ENCODE measurements at regions of chr1 and their contacts with region 1.

Region 1: GRCh38 chr1:225777583-225778336 is at the start of gene SRP9:
- DNase-seq: peak; percentile 100
- H3K4me3 Mint-ChIP-seq: no peak within 1 kb of the TSS
- H3K27ac Mint-ChIP-seq: no peak within 1 kb of the TSS
- H3K4me1 Mint-ChIP-seq: peaks cover 22% of the 10 kb centered on the region
- H3K27me3 Mint-ChIP-seq: no peaks in the 10 kb centered on the region
- total RNA-seq, gene SRP9: 232 and 244 TPM in 2 replicates

Region 2: DNA sequence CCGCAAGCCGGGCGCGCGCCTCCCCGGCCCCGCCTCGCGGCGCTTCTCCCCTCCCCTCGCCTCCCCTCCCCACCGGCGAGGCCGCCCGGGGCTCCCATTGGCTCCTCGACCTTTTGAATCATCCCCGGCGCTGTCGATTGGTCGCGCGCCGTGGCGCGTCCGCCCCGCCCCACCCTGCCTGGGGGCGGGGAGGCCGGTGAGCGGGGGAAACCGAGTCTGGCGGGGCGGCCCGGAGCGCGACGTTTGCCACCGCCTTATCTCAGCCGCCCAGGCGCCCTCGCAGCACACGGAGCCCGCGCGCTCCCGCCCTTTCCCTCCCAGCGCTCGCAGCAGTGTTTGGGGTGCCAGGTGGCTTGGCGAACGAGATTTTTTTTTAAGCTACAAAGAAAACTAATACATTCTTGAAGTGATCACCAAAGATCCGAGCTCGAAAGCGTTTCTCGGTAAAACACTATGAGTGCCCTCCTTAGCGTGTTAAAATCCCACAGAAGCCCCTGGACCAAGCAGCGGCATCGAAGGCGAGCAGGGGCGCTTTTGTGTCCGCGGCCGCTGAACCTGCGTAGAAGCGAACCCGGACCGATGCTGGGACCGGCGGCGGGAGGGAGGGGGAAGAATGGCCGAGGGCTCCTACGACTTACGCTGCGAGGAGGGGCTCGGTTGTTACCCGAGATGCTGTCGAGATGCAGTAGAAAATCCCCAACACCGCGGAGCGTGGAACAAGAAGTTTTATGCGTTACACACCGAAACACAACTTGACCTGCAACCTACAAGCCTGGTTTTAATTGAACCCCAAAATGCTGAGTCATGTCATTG is 349.5 kb before region 1 on chr1:
- intact Hi-C with region 1: loop called (anchors 5 kb)
- DNase-seq: peak; percentile 98
- H3K4me3 Mint-ChIP-seq: peak overlapping the region; percentile 90
- H3K27ac Mint-ChIP-seq: peak overlapping the region; percentile 95
- H3K4me1 Mint-ChIP-seq: peaks cover 50% of the 10 kb centered on the region
- H3K27me3 Mint-ChIP-seq: no peaks in the 10 kb centered on the region

Region 3: DNA sequence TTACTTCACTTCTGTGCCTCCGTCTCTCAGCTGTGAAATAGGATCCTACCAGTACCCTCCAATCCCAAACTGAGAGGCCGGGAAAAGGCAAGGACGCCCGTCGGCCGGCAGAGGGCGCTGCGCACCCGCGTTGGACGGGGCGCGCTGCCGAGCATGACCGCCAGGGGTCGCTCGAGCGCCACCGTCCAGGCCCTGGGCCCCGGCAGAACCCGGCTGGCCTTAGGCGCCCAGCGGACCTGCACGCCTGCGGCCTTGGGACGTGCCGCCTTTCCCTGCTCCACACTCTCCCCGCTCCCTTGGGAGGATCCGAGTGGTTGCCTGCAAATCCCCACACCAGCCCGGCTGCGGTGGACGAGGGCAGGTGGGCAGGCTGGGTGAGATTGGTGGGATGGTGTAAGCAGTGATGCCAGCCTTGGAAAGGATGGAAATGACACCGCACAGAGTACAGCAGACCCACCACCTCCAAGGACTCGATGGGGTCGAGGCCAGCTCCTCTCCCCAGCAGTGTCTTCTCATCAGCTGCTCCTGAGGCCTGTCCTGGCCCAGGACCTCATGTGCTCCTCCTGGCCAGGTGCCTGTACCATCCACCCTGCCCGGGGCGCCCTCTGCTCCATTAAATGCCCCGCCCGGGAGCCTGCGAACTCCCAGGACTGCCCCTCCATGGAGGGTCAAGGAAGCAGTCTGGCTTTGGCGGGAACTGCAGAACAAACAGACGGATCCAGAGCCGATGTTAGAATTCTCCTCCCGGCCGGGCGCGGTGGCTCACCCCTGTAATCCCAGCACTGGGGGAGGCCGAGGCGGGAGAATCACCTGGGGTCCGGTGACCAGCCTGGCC is 302.6 kb before region 1 on chr1:
- intact Hi-C with region 1: loop called (anchors 2 kb)
- DNase-seq: peak; percentile 93
- H3K4me3 Mint-ChIP-seq: no peak overlapping the region
- H3K27ac Mint-ChIP-seq: no peak overlapping the region
- H3K4me1 Mint-ChIP-seq: peaks cover 38% of the 10 kb centered on the region
- H3K27me3 Mint-ChIP-seq: no peaks in the 10 kb centered on the region

Region 4: GRCh38 chr1:225754940-225755641 is 22.7 kb before region 1 on chr1:
- intact Hi-C with region 1: no loop called
- DNase-seq: no peak
- H3K4me3 Mint-ChIP-seq: no peak overlapping the region
- H3K27ac Mint-ChIP-seq: no peak overlapping the region
- H3K4me1 Mint-ChIP-seq: no peaks in the 10 kb centered on the region
- H3K27me3 Mint-ChIP-seq: peaks cover 9% of the 10 kb centered on the region

Region 5: DNA sequence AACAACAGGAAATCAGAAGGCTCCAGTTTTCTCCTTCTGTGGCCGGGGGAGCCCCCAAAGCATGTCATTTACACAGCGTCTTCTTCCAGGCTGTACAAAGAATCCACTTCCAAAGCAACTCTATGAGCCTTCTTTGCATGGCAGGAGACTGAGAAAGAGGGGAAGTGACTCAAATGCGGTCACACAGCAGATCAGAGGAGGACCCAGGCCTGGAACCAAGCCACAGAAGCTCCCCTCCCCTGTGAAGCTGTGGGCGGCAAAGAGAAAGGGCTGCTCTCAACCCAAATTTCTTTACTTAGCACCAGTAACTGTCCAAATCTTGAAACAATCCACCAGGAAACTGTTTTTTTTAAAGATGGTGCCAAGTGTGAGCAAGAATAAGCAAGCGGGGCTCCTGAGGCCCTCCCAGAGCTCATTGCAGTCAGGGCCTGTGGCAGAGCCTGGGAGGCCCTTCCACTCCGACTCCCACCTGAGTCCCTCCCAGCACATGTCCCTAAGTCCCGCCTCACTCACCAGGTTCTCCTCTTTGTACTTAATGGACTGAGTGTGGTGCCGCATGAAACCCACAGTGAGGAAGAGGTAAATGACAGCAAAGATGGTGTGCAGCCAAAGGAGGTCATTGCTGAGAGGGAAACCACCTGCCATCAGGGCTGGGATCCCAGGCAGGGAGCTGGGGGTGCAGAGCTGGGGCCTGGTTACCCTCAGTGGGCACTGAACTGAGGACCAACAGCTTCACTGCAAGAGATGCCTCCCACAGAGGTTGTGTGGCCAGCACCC is 88.5 kb after region 1 on chr1:
- intact Hi-C with region 1: loop called (anchors 1 kb)
- DNase-seq: peak; percentile 89
- H3K4me3 Mint-ChIP-seq: peak overlapping the region; percentile 66
- H3K27ac Mint-ChIP-seq: peak overlapping the region; percentile 74
- H3K4me1 Mint-ChIP-seq: peaks cover 31% of the 10 kb centered on the region
- H3K27me3 Mint-ChIP-seq: no peaks in the 10 kb centered on the region

Region 6: GRCh38 chr1:225896937-225897549 is 119.3 kb after region 1 on chr1:
- intact Hi-C with region 1: loop called (anchors 1 kb)
- DNase-seq: peak; percentile 95
- H3K4me3 Mint-ChIP-seq: peak overlapping the region; percentile 75
- H3K27ac Mint-ChIP-seq: peak overlapping the region; percentile 84
- H3K4me1 Mint-ChIP-seq: peaks cover 39% of the 10 kb centered on the region
- H3K27me3 Mint-ChIP-seq: peaks cover 17% of the 10 kb centered on the region

Region 7: GRCh38 chr1:225923692-225924555 is 146.2 kb after region 1 on chr1 and contains the start of gene PYCR2:
- intact Hi-C with region 1: loop called (anchors 1 kb)
- DNase-seq: peak; percentile 99
- H3K4me3 Mint-ChIP-seq: peak within 1 kb of the TSS; percentile 97
- H3K27ac Mint-ChIP-seq: peak within 1 kb of the TSS; percentile 95
- H3K4me1 Mint-ChIP-seq: peaks cover 39% of the 10 kb centered on the region
- H3K27me3 Mint-ChIP-seq: no peaks in the 10 kb centered on the region
- total RNA-seq, gene PYCR2: 144 and 150 TPM in 2 replicates

Region 8: DNA sequence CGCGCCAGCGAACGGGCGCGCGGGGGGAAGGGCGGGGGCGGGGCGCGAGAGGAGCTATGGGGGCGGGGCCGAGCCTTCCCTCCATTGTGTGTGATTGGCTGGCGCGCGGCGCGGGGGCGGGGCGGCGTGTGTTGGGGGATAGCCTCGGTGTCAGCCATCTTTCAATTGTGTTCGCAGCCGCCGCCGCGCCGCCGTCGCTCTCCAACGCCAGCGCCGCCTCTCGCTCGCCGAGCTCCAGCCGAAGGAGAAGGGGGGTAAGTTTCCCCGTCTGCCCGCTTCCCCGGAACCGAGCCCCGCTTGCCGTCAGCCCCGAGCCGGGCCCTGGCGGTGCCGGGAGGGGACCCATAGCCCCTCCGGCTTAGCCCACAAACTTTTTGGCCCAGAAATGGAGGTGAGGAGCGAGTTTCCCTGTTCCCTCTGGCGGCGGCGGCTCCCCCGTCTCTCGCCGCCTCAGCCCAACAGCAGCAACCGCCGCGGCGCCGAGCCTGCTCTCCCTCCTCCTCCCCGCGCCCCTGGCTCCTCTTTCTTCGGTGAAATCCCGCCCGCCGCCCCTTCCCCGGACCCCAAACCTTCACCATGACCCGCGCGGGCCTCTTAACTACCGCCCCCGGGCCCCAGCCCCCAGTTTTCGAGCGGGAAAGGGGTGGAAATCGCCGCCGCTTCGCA is 284.9 kb after region 1 on chr1 and contains the start of gene H3-3A:
- intact Hi-C with region 1: loop called (anchors 1 kb)
- DNase-seq: peak; percentile 99
- H3K4me3 Mint-ChIP-seq: peak within 1 kb of the TSS; percentile 99
- H3K27ac Mint-ChIP-seq: peak within 1 kb of the TSS; percentile 99
- H3K4me1 Mint-ChIP-seq: peaks cover 31% of the 10 kb centered on the region
- H3K27me3 Mint-ChIP-seq: no peaks in the 10 kb centered on the region
- total RNA-seq, gene H3-3A: 390 and 391 TPM in 2 replicates

Measured in activated CD4-positive, alpha-beta T cell treated with anti-CD3 and anti-CD28 coated beads, Interleukin-2, amount 10 ng/mL, durations not matched to agents 24 days and 14 days (primary cell).